ENCODE measurements at regions of chr19 and their contacts with region 1.

Region 1: GRCh38 chr19:47348819-47349795 is at the start of gene DHX34:
- DNase-seq: peak; percentile 98 to 100 (median 99)
- H3K4me3 ChIP-seq: peak within 1 kb of the TSS; percentile 92
- H3K4me3 Mint-ChIP-seq: peak within 1 kb of the TSS; percentile 91 to 98 (median 96)
- H3K27ac ChIP-seq: peak within 1 kb of the TSS; percentile 73
- H3K27ac Mint-ChIP-seq: peak within 1 kb of the TSS; percentile 81 to 98 (median 94)
- H3K4me1 ChIP-seq: peaks cover 22% of the 10 kb centered on the region
- H3K4me1 Mint-ChIP-seq: peaks cover 32 to 48% (median 33%) of the 10 kb centered on the region in 3 donors
- H3K27me3 ChIP-seq: no peaks in the 10 kb centered on the region
- H3K27me3 Mint-ChIP-seq: peaks cover 0 to 5% of the 10 kb centered on the region in 2 donors
- total RNA-seq, gene DHX34: 23.2 to 24.5 TPM

Region 2: GRCh38 chr19:47296036-47296435 is 53.1 kb before region 1 on chr19:
- CTCF ChIA-PET with region 1: interaction called, 11 read pairs
- POLR2A ChIA-PET with region 1: no interaction called
- DNase-seq: peak; percentile 61 to 83 (median 71)
- H3K4me3 ChIP-seq: no peak overlapping the region
- H3K4me3 Mint-ChIP-seq: no peak overlapping the region
- H3K27ac ChIP-seq: no peak overlapping the region
- H3K27ac Mint-ChIP-seq: peak overlapping the region in 2 of 8 donors; percentile 48 to 72
- H3K4me1 ChIP-seq: peaks cover 3% of the 10 kb centered on the region
- H3K4me1 Mint-ChIP-seq: peaks cover 7 to 14% (median 10%) of the 10 kb centered on the region in 3 donors
- H3K27me3 ChIP-seq: no peaks in the 10 kb centered on the region
- H3K27me3 Mint-ChIP-seq: no peaks in the 10 kb centered on the region

Region 3: GRCh38 chr19:47324502-47324901 is 24.6 kb before region 1 on chr19:
- CTCF ChIA-PET with region 1: no interaction called
- POLR2A ChIA-PET with region 1: no interaction called
- DNase-seq: no peak
- H3K4me3 ChIP-seq: no peak overlapping the region
- H3K4me3 Mint-ChIP-seq: no peak overlapping the region
- H3K27ac ChIP-seq: no peak overlapping the region
- H3K27ac Mint-ChIP-seq: no peak overlapping the region
- H3K4me1 ChIP-seq: no peaks in the 10 kb centered on the region
- H3K4me1 Mint-ChIP-seq: no peaks in the 10 kb centered on the region
- H3K27me3 ChIP-seq: no peaks in the 10 kb centered on the region
- H3K27me3 Mint-ChIP-seq: peaks cover 18 to 47% of the 10 kb centered on the region in 2 donors

Region 4: GRCh38 chr19:47336853-47337279 is 12.2 kb before region 1 on chr19:
- CTCF ChIA-PET with region 1: interaction called, 20 read pairs
- POLR2A ChIA-PET with region 1: interaction called, 6 read pairs
- DNase-seq: peak in 1 of 5 donors; percentile 17
- H3K4me3 ChIP-seq: no peak overlapping the region
- H3K4me3 Mint-ChIP-seq: peak overlapping the region in 4 of 7 donors; percentile 19 to 71 (median 62)
- H3K27ac ChIP-seq: peak overlapping the region; percentile 31
- H3K27ac Mint-ChIP-seq: peak overlapping the region in 6 of 8 donors; percentile 21 to 88 (median 68)
- H3K4me1 ChIP-seq: peaks cover 5% of the 10 kb centered on the region
- H3K4me1 Mint-ChIP-seq: peaks cover 8 to 16% (median 12%) of the 10 kb centered on the region in 3 donors
- H3K27me3 ChIP-seq: no peaks in the 10 kb centered on the region
- H3K27me3 Mint-ChIP-seq: peaks cover 2 to 8% of the 10 kb centered on the region in 2 donors

Region 5: GRCh38 chr19:47471733-47472457 is 122.8 kb after region 1 on chr19 and contains the start of gene SLC8A2:
- CTCF ChIA-PET with region 1: no interaction called
- POLR2A ChIA-PET with region 1: no interaction called
- DNase-seq: peak; percentile 45 to 77 (median 57)
- H3K4me3 ChIP-seq: no peak within 1 kb of the TSS
- H3K4me3 Mint-ChIP-seq: peak within 1 kb of the TSS; percentile 18 to 86 (median 27)
- H3K27ac ChIP-seq: no peak within 1 kb of the TSS
- H3K27ac Mint-ChIP-seq: peak within 1 kb of the TSS in 2 of 8 donors; percentile 1 to 9
- H3K4me1 ChIP-seq: peaks cover 6% of the 10 kb centered on the region
- H3K4me1 Mint-ChIP-seq: peaks cover 9 to 17% (median 15%) of the 10 kb centered on the region in 3 donors
- H3K27me3 ChIP-seq: peaks cover 30% of the 10 kb centered on the region
- H3K27me3 Mint-ChIP-seq: peaks cover 38 to 57% of the 10 kb centered on the region in 2 donors
- total RNA-seq, gene SLC8A2: not detected

Measured in CD8-positive, alpha-beta memory T cell (primary cell).